ENCODE measurements at regions of chr4 and their contacts with region 1.

Region 1: GRCh38 chr4:186587416-186588018 is 32.1 kb upstream of the MTNR1A start:
- DNase-seq: peak; percentile 61 to 79 (median 64)
- ATAC-seq: peak; percentile 91
- H3K4me3 ChIP-seq: no peak overlapping the region
- H3K27ac ChIP-seq: no peak overlapping the region
- H3K4me1 ChIP-seq: no peaks in the 10 kb centered on the region
- H3K27me3 ChIP-seq: no peaks in the 10 kb centered on the region
- CTCF ChIP-seq: peak; percentile 72 to 83 (median 74)
- EP300 ChIP-seq: no peak
- POLR2A ChIP-seq: no peak
- RAD21 ChIP-seq: peak; percentile 79 to 85

Region 2: DNA sequence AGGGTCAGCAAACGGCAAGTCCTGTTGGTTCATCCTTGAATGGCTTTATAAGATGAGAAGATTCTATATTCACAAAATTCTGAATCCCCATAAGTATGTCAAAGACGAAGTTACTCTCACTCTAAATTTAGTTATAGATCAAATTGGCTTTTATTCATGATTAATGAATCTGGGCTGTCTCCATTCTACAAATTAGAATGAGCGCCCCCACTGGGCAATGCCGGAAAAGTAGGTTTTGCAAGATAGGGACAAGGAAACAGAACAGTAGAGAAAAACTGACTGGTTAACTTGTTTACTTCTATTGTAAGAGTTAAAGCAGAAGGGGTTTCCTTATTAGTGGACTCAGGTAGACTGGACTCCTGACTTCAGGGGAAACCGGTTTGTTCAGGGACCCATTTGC is 221.2 kb before region 1 on chr4:
- CTCF ChIA-PET with region 1: interaction called, 4 read pairs
- POLR2A ChIA-PET with region 1: no interaction called
- in situ Hi-C with region 1: no loop called
- intact Hi-C with region 1: loop called (anchors 1 kb)
- DNase-seq: peak in 1 of 4 experiments; percentile 17
- ATAC-seq: no peak
- H3K4me3 ChIP-seq: no peak overlapping the region
- H3K27ac ChIP-seq: no peak overlapping the region
- H3K4me1 ChIP-seq: no peaks in the 10 kb centered on the region
- H3K27me3 ChIP-seq: no peaks in the 10 kb centered on the region
- CTCF ChIP-seq: peak in 2 of 3 experiments; percentile 16 to 21; a peak in 1 of 6 replicates
- EP300 ChIP-seq: no peak
- POLR2A ChIP-seq: no peak
- RAD21 ChIP-seq: no peak

Region 3: DNA sequence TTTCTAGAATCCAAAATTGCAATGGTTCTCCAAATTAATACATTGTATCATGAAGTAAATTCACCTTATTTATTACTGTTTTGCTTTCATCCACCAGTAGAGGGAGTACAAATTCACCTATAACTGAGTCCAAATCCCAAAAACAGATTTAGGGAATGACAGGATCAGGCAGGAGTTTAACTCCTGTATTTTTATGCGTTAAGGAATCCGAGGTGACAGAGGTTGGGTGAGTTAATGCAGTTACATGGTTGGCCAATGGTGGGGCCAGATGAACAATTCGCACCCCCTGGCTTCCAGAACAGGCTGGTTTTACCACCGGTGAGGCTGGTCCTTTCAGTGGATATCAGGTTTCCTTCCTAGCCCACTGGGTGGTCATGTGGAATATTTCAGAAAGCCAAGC is 114.6 kb before region 1 on chr4:
- CTCF ChIA-PET with region 1: interaction called, 6 read pairs
- POLR2A ChIA-PET with region 1: no interaction called
- in situ Hi-C with region 1: no loop called
- intact Hi-C with region 1: loop called (anchors 1 kb)
- DNase-seq: peak in 3 of 4 experiments; percentile 13 to 21 (median 13)
- ATAC-seq: peak; percentile 47
- H3K4me3 ChIP-seq: no peak overlapping the region
- H3K27ac ChIP-seq: no peak overlapping the region
- H3K4me1 ChIP-seq: no peaks in the 10 kb centered on the region; a peak in 1 of 5 replicates
- H3K27me3 ChIP-seq: no peaks in the 10 kb centered on the region
- CTCF ChIP-seq: peak; percentile 37 to 67 (median 64)
- EP300 ChIP-seq: no peak
- POLR2A ChIP-seq: no peak
- RAD21 ChIP-seq: peak; percentile 40 to 50; a peak in 3 of 4 replicates

Measured in K562 (cell line).